Caco-2 (cell line): ENCODE measurements at regions of chr12 and their contacts with region 1.

Region 1: DNA sequence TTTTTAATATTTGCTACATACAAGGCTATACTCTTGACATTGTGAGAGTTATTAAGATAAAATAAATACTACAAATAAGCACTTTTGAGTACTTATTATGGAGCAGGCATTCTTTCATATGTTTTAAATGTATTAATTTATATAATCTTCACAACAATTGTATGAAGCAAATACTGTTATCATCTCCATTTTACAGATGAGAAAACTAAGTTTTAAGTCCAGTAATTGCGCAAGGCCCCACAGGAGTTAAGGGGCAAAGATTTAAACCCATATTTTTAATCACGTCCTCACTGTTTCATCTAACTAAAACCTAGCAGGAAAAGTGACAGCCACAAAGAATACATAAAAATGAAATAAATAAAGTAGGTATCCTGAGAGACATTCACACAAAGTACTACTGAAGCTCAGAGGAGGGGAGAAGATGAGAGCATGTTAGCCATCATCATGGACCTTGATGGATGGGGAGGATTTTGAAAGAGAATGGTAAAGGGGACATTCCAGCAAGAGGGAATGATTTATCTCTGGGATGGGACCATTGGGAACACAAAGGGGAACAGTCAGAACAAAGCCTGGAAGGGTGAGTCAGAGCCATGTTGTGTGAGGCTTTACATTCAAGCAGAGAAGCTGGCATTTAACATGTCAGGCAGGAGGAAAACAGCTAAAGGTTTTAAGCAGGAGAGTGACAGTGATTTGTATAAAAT is 174.8 kb downstream of the SYT10 start:
- DNase-seq: no peak
- H3K4me3 ChIP-seq: no peak overlapping the region
- H3K4me3 Mint-ChIP-seq: no peak overlapping the region
- H3K27ac Mint-ChIP-seq: peak overlapping the region; percentile 26
- H3K4me1 ChIP-seq: peaks cover 18% of the 10 kb centered on the region
- H3K4me1 Mint-ChIP-seq: peaks cover 34% of the 10 kb centered on the region
- H3K27me3 ChIP-seq: no peaks in the 10 kb centered on the region
- H3K27me3 Mint-ChIP-seq: no peaks in the 10 kb centered on the region
- CTCF ChIP-seq: no peak

Region 2: GRCh38 chr12:33222360-33223111 is 42.3 kb before region 1 on chr12:
- CTCF ChIA-PET with region 1: no interaction called
- POLR2A ChIA-PET with region 1: no interaction called
- intact Hi-C with region 1: loop called (anchors 2 kb)
- DNase-seq: no peak
- H3K4me3 ChIP-seq: no peak overlapping the region
- H3K4me3 Mint-ChIP-seq: no peak overlapping the region
- H3K27ac Mint-ChIP-seq: no peak overlapping the region
- H3K4me1 ChIP-seq: no peaks in the 10 kb centered on the region
- H3K4me1 Mint-ChIP-seq: peaks cover 6% of the 10 kb centered on the region
- H3K27me3 ChIP-seq: no peaks in the 10 kb centered on the region
- H3K27me3 Mint-ChIP-seq: no peaks in the 10 kb centered on the region
- CTCF ChIP-seq: no peak

Region 3: DNA sequence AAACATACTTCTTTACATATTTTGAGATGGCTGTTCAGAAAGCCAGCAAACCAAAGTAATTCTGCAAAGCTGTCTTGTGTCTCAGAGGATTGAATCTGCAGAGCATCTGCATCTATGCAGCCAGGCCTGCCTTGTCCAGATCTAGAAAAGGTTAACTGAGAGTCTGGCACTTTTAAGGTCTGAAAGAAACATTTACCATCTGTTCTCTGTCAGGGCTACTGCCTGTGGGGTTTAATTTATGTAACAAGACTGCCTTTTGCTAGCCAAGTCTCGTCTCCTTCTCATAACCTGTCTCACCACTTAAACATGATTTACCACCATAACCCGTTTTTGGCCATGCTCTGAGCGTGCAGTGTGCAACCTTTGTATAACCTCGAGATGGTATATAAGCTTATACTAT is 19.4 kb before region 1 on chr12:
- CTCF ChIA-PET with region 1: no interaction called
- POLR2A ChIA-PET with region 1: no interaction called
- intact Hi-C with region 1: loop called (anchors 1 kb)
- DNase-seq: no peak
- H3K4me3 ChIP-seq: no peak overlapping the region
- H3K4me3 Mint-ChIP-seq: no peak overlapping the region
- H3K27ac Mint-ChIP-seq: no peak overlapping the region
- H3K4me1 ChIP-seq: peaks cover 18% of the 10 kb centered on the region
- H3K4me1 Mint-ChIP-seq: peaks cover 11% of the 10 kb centered on the region
- H3K27me3 ChIP-seq: no peaks in the 10 kb centered on the region
- H3K27me3 Mint-ChIP-seq: no peaks in the 10 kb centered on the region
- CTCF ChIP-seq: no peak